ENCODE measurements at regions of chr4 and their contacts with region 1.

Region 1: DNA sequence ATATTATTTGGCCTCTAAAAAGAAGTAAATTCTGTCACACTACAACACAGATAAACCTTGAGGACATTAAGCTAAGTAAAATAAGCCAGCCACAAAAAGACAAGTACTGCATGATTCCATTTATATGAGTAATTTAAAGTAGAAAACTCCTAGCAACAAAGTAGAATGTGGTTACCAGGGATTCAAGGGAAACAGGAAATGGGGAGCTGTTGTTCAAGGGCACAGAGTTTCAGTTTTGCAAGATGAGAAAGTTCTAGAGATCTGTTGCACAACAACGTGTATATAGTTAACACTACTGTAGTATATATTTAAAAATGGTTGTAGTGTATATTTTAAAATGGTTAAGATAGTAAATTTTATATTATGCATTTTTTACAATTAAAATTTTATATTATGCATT is 25.4 kb downstream of the SEC31A start:
- DNase-seq: no peak
- ATAC-seq: no peak
- H3K4me3 ChIP-seq: no peak overlapping the region
- H3K27ac ChIP-seq: no peak overlapping the region
- H3K4me1 ChIP-seq: no peaks in the 10 kb centered on the region
- H3K27me3 ChIP-seq: no peaks in the 10 kb centered on the region
- CTCF ChIP-seq: no peak

Region 2: DNA sequence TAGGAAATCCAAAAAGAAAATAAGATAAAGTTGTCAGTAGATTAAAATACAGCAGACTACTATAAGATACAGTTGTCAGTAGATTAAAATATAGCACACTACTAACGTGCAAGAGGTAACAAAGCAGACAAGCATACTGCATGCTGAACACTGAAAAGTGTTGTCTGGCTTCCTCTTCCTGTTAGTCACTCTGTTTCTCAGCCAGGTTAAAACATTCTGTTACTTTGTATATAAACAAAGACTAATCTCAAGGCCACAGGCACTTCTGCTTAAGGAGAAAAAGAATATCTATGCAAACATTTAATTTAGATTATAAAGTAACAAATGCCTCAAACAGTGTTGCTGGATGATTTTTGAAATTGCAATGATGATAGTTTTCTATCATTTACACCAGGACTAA is 26.0 kb before region 1 on chr4:
- intact Hi-C with region 1: loop called in 1 of 2 experiments (anchors 5 kb)
- DNase-seq: no peak
- ATAC-seq: no peak
- H3K4me3 ChIP-seq: no peak overlapping the region
- H3K27ac ChIP-seq: no peak overlapping the region
- H3K4me1 ChIP-seq: peaks cover 3% of the 10 kb centered on the region
- H3K27me3 ChIP-seq: no peaks in the 10 kb centered on the region
- CTCF ChIP-seq: no peak

Region 3: DNA sequence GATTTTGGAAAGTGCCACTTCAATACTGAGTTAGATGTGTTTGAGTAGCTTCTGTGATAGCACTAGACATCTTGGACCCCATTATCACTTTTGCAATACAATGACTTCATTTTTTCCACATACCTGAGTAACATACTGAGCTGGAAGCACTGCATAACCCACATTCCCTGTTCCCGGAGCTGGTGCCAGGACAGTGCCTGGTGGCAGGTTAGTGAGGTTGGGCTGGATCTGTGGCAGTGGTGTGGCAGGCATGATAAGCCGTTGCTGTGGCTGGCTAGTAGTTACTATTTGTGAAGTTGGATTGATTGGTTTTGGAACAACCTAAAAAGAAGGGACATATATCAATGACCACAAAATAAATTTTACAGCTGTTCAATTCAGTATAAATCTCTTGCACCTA is 73.8 kb after region 1 on chr4:
- intact Hi-C with region 1: no loop called
- DNase-seq: no peak
- ATAC-seq: no peak
- H3K4me3 ChIP-seq: no peak overlapping the region
- H3K27ac ChIP-seq: no peak overlapping the region
- H3K4me1 ChIP-seq: no peaks in the 10 kb centered on the region
- H3K27me3 ChIP-seq: no peaks in the 10 kb centered on the region
- CTCF ChIP-seq: no peak

Region 4: GRCh38 chr4:83417566-83417965 is 552.0 kb after region 1 on chr4:
- intact Hi-C with region 1: loop called in 1 of 2 experiments (anchors 10 kb)
- DNase-seq: no peak
- ATAC-seq: no peak
- H3K4me3 ChIP-seq: no peak overlapping the region
- H3K27ac ChIP-seq: no peak overlapping the region
- H3K4me1 ChIP-seq: no peaks in the 10 kb centered on the region
- H3K27me3 ChIP-seq: no peaks in the 10 kb centered on the region
- CTCF ChIP-seq: no peak

Measured in psoas muscle (tissue), 8 donors.